ENCODE measurements at regions of chr15 and their contacts with region 1.

Region 1: DNA sequence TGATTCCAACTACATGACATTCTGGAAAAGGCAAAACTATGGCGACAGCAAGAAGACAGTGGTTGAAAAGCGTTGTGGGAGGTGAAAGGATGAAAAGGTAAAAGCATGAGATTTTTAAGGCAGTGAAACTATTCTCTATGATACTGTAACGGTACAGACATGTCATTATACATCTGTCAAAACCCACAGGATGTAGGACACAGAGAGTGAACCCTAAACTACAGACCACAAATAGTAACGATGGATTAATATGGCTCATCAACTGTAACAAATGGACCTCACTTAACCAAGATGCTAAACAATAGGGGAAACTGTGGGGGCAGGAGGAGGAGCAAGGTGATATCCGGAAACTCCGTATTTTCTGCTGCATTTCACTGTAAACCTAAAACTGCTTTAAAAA is 39.1 kb downstream of the MYO9A start:
- DNase-seq: peak; percentile 85
- H3K4me3 ChIP-seq: peak overlapping the region; percentile 58
- H3K27ac ChIP-seq: peak overlapping the region; percentile 95
- H3K4me1 ChIP-seq: peaks cover 70% of the 10 kb centered on the region
- CTCF ChIP-seq: no peak

Region 2: DNA sequence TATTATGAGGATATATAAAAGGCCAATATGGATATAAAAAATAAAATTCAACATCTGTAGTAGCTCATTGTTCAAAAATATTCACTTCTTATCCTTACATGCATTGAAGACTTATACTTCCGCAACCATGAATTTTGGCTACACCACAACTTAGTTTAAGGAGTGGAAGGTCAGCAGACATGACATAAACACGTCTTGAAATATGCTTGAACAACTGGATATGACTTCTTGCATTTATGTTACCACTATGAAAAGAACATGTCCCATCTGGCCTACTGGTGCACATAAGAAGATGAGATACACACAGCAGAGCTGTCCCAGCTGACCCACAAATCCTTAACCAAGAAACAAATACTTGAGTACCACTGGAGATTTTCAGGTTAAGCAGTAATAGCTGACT is 13.1 kb before region 1 on chr15:
- CTCF ChIA-PET with region 1: no interaction called
- POLR2A ChIA-PET with region 1: interaction called, 11 read pairs
- intact Hi-C with region 1: no loop called
- DNase-seq: no peak
- H3K4me3 ChIP-seq: no peak overlapping the region
- H3K27ac ChIP-seq: no peak overlapping the region
- H3K4me1 ChIP-seq: peaks cover 29% of the 10 kb centered on the region
- CTCF ChIP-seq: no peak

Region 3: GRCh38 chr15:72098040-72098439 is 19.2 kb after region 1 on chr15:
- CTCF ChIA-PET with region 1: no interaction called
- POLR2A ChIA-PET with region 1: interaction called, 5 read pairs
- intact Hi-C with region 1: loop called (anchors 2 kb)
- DNase-seq: no peak
- H3K4me3 ChIP-seq: no peak overlapping the region
- H3K27ac ChIP-seq: no peak overlapping the region
- H3K4me1 ChIP-seq: peaks cover 7% of the 10 kb centered on the region
- CTCF ChIP-seq: no peak

Region 4: GRCh38 chr15:72382146-72382545 is 303.3 kb after region 1 on chr15:
- CTCF ChIA-PET with region 1: no interaction called
- POLR2A ChIA-PET with region 1: no interaction called
- intact Hi-C with region 1: no loop called
- DNase-seq: peak; percentile 14
- H3K4me3 ChIP-seq: no peak overlapping the region
- H3K27ac ChIP-seq: no peak overlapping the region
- H3K4me1 ChIP-seq: peaks cover 4% of the 10 kb centered on the region
- CTCF ChIP-seq: peak; percentile 45